ENCODE measurements at regions of chr4 and their contacts with region 1.

Region 1: GRCh38 chr4:99462875-99463464 is 27.8 kb upstream of the ADH7 start:
- DNase-seq: peak; percentile 63
- H3K4me3 ChIP-seq: no peak overlapping the region
- H3K27ac ChIP-seq: no peak overlapping the region
- H3K4me1 ChIP-seq: no peaks in the 10 kb centered on the region
- H3K27me3 ChIP-seq: no peaks in the 10 kb centered on the region
- CTCF ChIP-seq: peak; percentile 50 to 86 (median 78)
- POLR2A ChIP-seq: no peak

Region 2: GRCh38 chr4:98939892-98940298 is 523.1 kb before region 1 on chr4:
- intact Hi-C with region 1: loop called (anchors 5 kb)
- DNase-seq: peak; percentile 8
- H3K4me3 ChIP-seq: no peak overlapping the region
- H3K27ac ChIP-seq: no peak overlapping the region
- H3K4me1 ChIP-seq: no peaks in the 10 kb centered on the region
- H3K27me3 ChIP-seq: no peaks in the 10 kb centered on the region
- CTCF ChIP-seq: peak; percentile 31 to 56 (median 54)
- POLR2A ChIP-seq: no peak

Region 3: DNA sequence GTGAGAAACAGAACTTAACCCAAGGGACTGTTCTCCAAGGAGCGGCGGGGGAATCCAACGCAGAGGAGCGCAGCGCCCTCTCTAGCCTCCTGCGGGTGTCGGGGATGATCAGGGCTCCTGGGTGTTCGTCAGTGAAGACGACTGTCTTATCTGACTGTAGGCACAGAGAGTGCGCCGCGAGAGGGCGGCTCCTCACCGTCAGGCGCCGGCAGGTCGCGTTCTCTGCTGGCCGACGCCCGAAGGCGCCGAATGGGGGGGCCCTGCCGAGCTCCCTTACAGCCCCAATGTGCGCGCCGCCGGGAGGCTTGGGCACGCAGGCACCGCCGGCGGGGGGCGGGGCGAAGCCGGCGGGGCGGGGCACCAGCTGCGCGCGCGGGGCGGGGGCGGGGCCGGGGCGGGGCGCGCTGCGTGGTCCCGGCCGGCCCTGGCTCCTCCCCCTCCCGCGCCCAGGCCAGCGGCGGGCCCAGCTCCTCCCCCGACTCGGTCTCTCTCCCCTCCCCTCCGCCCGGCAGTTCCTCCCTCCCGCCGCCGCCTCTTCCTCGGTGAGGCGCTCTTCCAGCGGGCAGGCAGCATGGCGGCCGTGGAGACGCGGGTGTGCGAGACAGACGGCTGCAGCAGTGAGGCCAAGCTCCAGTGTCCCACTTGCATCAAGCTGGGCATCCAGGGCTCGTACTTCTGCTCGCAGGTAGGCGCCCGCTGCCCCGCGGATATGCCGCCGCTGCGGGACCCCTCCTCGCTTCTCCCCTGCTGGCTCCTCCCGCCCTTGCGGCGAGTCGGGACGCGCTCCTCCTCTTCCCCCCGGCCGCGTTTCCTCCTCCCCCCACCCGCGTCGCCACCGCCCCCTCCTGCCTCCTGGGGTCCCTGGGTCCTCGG is 467.6 kb before region 1 on chr4 and contains the start of gene METAP1:
- intact Hi-C with region 1: loop called (anchors 10 kb)
- DNase-seq: peak; percentile 98
- H3K4me3 ChIP-seq: peak within 1 kb of the TSS; percentile 90 to 94
- H3K27ac ChIP-seq: peak within 1 kb of the TSS; percentile 91 to 93
- H3K4me1 ChIP-seq: no peaks in the 10 kb centered on the region
- H3K27me3 ChIP-seq: no peaks in the 10 kb centered on the region
- CTCF ChIP-seq: peak; percentile 36 to 96 (median 90)
- POLR2A ChIP-seq: peak; percentile 82
- total RNA-seq, gene METAP1: 55.3 to 70.1 TPM

Region 4: GRCh38 chr4:99234331-99235010 is 228.5 kb before region 1 on chr4:
- intact Hi-C with region 1: no loop called
- DNase-seq: no peak
- H3K4me3 ChIP-seq: no peak overlapping the region
- H3K27ac ChIP-seq: no peak overlapping the region
- H3K4me1 ChIP-seq: no peaks in the 10 kb centered on the region
- H3K27me3 ChIP-seq: no peaks in the 10 kb centered on the region
- CTCF ChIP-seq: no peak
- POLR2A ChIP-seq: no peak

Measured in prostate gland (tissue), 2 donors.